CD4-positive, alpha-beta T cell (primary cell): ENCODE measurements at regions of chr19 and their contacts with region 1.

Region 1: DNA sequence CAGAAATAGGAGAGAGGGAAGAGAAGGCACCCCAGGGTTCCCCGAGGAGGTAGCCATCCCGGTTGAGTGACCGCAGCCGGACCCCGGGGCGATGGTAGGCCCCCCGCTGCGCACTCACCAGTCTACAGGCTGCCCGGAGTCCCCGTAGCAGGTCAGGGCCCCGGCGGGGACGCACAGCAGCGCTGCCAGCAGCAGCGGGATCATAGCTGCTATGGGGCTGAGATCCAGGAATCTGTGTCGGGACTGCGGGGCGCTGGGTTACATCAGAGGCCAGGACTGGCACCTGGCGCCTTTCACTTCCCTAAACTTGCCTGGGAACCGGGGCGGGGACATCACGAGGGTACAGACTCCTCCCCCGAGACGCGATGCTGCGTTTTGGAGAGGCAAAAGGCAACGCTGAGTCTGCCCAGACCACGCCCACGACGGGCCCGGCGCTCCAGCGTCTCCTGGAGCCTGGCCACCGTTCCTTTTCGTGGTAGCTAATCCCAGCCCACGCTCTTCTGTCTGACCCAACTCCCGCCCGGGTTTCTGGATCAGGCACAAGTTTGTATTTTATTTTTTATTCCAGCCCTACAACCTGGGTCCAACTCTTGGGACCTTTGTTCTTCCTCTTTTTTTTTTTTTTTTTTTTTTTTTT is at the start of gene DNASE2:
- DNase-seq: peak; percentile 73 to 95 (median 86)
- ATAC-seq: peak; percentile 74
- H3K4me3 ChIP-seq: peak within 1 kb of the TSS; percentile 89
- H3K4me3 Mint-ChIP-seq: peak within 1 kb of the TSS; percentile 89
- H3K27ac ChIP-seq: peak within 1 kb of the TSS; percentile 46 to 58
- H3K27ac Mint-ChIP-seq: peak within 1 kb of the TSS; percentile 86
- H3K4me1 ChIP-seq: peaks cover 52% of the 10 kb centered on the region
- H3K4me1 Mint-ChIP-seq: peaks cover 23% of the 10 kb centered on the region
- H3K27me3 ChIP-seq: no peaks in the 10 kb centered on the region
- H3K27me3 Mint-ChIP-seq: no peaks in the 10 kb centered on the region
- CTCF ChIP-seq: no peak
- total RNA-seq, gene DNASE2: 10.4 to 11.1 TPM

Region 2: DNA sequence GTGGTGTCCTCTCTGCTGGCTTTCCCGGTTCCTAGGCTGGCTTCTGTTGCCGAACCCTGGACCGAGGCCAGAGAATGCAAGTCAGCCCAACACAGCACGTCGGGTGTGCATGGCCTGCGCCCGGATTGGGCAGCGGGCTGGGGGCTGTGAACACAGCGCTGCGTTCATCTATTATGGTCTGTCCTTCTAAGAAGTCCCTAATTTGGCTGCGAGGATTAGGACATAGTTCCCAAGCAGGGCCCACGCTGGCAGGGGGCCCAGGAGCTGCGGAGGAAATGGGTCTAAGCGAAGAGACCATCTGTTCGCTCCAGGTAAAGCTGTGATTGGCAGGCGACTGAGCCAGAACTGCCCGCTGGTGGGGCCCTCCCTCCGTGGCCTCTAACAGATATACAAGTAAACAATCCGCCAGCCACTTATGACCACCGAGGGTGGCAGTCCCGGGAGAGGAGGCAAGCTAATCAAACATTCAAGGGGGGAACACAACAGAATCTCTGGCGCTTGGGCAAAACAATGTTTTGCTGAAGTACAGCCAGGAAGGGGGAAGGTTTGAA is 31.8 kb after region 1 on chr19:
- CTCF ChIA-PET with region 1: interaction called, 4 read pairs
- POLR2A ChIA-PET with region 1: interaction called, 12 read pairs
- intact Hi-C with region 1: no loop called
- DNase-seq: no peak
- ATAC-seq: no peak
- H3K4me3 ChIP-seq: no peak overlapping the region
- H3K4me3 Mint-ChIP-seq: no peak overlapping the region
- H3K27ac ChIP-seq: no peak overlapping the region
- H3K27ac Mint-ChIP-seq: peak overlapping the region; percentile 91
- H3K4me1 ChIP-seq: peaks cover 23% of the 10 kb centered on the region
- H3K4me1 Mint-ChIP-seq: peaks cover 27% of the 10 kb centered on the region
- H3K27me3 ChIP-seq: no peaks in the 10 kb centered on the region
- H3K27me3 Mint-ChIP-seq: no peaks in the 10 kb centered on the region
- CTCF ChIP-seq: no peak

Region 3: DNA sequence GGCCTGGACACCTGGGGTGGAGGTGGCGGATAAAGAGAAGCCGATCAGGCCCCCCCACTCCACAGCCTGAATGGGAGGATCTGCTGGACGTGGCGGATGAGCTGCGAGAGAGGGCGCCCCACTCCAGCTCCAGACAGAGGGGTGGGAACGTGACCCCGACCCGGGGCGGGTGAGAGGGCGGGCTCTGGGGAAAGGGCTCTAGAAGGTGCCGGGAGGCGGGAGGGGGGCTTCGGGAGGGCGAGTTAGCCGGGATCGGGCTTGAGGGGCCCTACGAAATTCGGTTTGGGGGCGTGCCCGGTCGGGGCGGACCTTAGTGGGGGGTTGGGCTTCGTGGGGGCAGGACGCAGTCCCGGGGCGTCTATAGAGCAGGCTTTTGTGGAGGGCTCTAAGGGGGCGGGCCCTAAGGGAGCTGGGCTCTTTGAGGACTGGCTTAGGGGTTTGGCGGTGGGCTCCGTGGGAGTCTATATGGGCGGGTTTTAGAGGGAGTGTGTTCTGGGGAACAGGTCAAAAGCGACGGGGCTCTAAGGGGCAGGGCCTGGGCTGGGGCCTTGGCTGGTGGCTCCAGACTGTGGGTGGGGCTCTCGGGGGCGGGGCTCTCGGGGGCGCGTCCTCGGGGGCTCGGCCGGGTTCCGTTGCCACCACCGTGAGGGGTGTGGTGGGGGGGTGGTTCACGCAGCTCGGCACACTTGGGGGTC is 991.6 kb after region 1 on chr19:
- CTCF ChIA-PET with region 1: no interaction called
- POLR2A ChIA-PET with region 1: no interaction called
- intact Hi-C with region 1: no loop called
- DNase-seq: peak in 3 of 14 experiments; percentile 36 to 63 (median 52)
- ATAC-seq: peak; percentile 83
- H3K4me3 ChIP-seq: peak overlapping the region; percentile 24
- H3K4me3 Mint-ChIP-seq: peak overlapping the region; percentile 65
- H3K27ac ChIP-seq: no peak overlapping the region
- H3K27ac Mint-ChIP-seq: no peak overlapping the region
- H3K4me1 ChIP-seq: peaks cover 12% of the 10 kb centered on the region
- H3K4me1 Mint-ChIP-seq: peaks cover 8% of the 10 kb centered on the region
- H3K27me3 ChIP-seq: peaks cover 3 to 21% of the 10 kb centered on the region in 2 experiments
- H3K27me3 Mint-ChIP-seq: peaks cover 39% of the 10 kb centered on the region
- CTCF ChIP-seq: no peak